Posterior vena cava (tissue), 2 donors: ENCODE measurements at regions of chr2 and their contacts with region 1.

Region 1: DNA sequence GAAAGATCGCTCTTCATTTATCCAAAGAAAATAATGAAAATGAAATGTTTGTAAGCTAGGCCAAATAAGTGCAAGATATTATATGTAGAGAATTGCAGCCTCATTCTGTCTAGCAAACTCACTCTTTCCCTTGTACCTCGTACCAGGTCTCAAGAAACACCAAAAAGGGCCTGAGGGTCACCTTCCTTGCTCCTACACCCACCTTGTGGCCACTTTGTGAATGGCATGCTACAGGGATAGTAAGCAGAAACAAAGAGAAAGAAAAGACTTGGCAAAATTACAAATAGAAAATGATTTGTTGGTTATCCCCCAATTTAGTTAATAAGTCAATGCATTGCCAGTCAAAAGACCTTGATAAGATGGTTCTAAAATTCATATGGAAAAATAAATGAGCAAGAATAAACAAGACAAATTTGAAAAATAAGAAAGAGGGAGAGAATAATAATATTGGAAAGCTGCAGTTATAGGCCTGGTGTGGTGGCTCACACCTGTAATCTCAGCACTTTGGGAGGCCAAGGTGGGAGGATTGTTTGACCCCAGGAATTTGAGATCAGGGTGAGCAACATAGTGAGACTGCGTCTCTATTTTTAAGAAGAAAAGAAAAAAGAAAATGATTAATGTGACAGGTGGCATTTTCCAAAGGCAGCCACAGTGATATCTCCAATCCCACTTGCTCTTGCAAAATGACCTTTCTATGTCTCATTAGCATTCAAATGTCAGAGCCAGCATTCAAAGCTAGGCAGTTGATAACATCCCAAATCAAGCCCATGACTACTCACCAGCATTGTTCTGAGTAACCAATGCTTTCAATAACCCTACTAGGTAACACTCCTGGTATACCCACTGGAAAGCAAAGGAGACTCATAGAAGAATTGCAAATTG is 38.8 kb upstream of the BMP10 start:
- DNase-seq: no peak

Region 2: GRCh38 chr2:68491582-68491981 is 418.5 kb before region 1 on chr2:
- intact Hi-C with region 1: loop called in 1 of 2 experiments (anchors 10 kb)
- DNase-seq: no peak

Region 3: GRCh38 chr2:68751397-68752339 is 158.4 kb before region 1 on chr2:
- intact Hi-C with region 1: loop called (anchors 1 to 5 kb)
- DNase-seq: peak; percentile 96

Region 4: DNA sequence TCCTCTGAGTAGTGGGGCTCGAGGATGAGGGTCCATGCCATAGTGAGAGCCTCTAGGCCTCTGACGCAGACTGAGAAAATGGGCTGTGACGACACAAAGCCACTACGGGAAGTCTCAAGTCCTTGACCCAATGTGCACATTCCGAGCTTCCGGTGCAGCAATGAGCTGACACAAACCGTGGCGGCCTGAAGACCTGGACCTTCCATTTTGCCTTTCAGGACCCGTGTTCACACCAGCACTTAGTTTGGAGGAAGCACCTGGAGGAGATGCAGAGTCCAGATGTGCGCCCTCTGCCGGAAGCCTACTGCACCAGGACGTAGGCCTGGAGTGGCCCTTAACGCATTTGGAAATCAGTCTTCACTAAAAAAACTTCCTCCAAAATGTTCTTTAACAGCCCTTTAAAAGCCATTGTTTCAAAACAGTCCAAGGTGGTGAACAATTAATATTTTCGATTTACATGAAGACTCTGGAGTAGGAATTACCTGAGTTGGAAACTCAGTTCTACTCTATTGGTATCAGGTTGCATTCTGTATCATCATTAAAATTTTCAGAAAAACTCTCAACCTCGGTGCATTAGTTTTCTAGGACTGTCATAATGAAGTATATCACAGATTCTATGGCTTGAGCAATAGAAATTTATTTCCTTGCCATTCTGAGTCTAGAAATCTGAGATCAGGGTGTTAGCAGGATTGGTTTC is 72.7 kb before region 1 on chr2:
- intact Hi-C with region 1: loop called in 1 of 2 experiments (anchors 2 kb)
- DNase-seq: peak; percentile 88